Activated CD8-positive, alpha-beta T cell treated with anti-CD3 and anti-CD28 coated beads for 36 hours (primary cell): ENCODE measurements at regions of chrX and their contacts with region 1.

Region 1: DNA sequence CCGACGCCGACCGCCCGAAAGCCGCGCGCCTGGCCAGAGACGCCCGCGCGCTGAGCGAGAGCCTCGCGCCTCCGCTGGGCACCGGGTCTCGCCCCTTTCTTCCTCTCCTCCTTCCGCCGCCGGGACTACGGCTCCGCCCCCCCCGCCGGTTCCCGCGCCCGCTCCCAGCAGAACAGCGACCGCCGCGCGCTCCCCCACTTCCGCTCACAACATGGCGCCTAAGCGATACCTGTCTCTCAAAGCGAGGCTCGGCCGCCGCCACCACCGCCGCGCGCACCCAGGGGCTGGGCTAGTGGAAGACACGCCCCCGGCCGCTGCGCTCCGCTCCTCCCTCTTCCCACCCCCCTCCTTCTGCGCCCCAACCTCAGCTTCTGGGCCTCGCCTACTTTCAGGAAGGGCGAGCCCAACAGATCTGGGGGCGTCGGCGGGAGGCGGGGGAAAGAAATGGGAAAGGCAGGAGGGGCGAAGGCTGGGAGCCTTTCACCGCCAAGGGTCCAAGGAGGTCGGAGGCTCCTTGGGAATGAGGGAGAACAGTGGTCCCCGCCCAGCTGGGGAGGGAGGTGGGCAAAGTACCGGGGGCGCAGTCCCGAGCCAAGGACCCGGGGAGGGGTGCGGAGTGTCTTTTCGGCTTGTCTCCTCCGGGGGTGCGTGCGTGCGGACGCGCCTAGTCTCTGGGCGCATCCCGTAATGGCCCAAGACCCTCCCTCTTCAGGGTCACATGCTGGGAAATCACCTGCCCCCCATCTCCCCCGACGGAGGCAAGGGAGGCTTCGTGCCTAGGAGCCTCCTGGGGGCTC is at the start of gene RPS6KA3:
- DNase-seq: peak; percentile 92
- ATAC-seq: peak; percentile 84
- H3K4me3 Mint-ChIP-seq: peak within 1 kb of the TSS; percentile 86
- H3K27ac Mint-ChIP-seq: peak within 1 kb of the TSS; percentile 98
- H3K4me1 Mint-ChIP-seq: peaks cover 9% of the 10 kb centered on the region
- H3K27me3 Mint-ChIP-seq: no peaks in the 10 kb centered on the region
- CTCF ChIP-seq: no peak
- total RNA-seq, gene RPS6KA3: 52.6 to 56.9 TPM

Region 2: GRCh38 chrX:20091499-20091898 is 175.5 kb before region 1 on chrX:
- CTCF ChIA-PET with region 1: no interaction called
- POLR2A ChIA-PET with region 1: no interaction called
- intact Hi-C with region 1: no loop called
- DNase-seq: no peak
- ATAC-seq: no peak
- H3K4me3 Mint-ChIP-seq: no peak overlapping the region
- H3K27ac Mint-ChIP-seq: no peak overlapping the region
- H3K4me1 Mint-ChIP-seq: no peaks in the 10 kb centered on the region
- H3K27me3 Mint-ChIP-seq: peaks cover 3% of the 10 kb centered on the region
- CTCF ChIP-seq: no peak

Region 3: DNA sequence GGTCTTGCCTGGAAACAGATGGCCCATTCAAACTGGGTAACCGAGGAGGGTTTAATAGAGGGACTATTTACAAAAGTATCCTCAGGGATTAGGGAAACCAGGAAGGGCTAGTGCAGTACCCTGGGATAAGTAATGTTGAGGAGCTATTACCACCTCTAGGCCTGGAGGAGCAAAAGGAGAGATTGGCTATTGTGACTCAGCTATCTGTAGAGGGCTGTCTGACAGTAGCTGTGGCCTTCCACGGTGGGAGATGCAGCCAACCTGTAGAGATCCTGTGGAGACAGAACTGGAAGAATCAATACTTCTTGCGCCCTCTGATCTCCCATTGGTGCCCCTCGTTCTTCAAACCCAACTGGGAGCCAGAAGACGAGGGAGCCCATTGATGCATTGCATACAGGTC is 33.8 kb after region 1 on chrX:
- CTCF ChIA-PET with region 1: no interaction called
- POLR2A ChIA-PET with region 1: no interaction called
- intact Hi-C with region 1: no loop called
- DNase-seq: peak; percentile 13
- ATAC-seq: peak; percentile 45
- H3K4me3 Mint-ChIP-seq: no peak overlapping the region
- H3K27ac Mint-ChIP-seq: no peak overlapping the region
- H3K4me1 Mint-ChIP-seq: no peaks in the 10 kb centered on the region
- H3K27me3 Mint-ChIP-seq: peaks cover 3% of the 10 kb centered on the region
- CTCF ChIP-seq: no peak

Region 4: DNA sequence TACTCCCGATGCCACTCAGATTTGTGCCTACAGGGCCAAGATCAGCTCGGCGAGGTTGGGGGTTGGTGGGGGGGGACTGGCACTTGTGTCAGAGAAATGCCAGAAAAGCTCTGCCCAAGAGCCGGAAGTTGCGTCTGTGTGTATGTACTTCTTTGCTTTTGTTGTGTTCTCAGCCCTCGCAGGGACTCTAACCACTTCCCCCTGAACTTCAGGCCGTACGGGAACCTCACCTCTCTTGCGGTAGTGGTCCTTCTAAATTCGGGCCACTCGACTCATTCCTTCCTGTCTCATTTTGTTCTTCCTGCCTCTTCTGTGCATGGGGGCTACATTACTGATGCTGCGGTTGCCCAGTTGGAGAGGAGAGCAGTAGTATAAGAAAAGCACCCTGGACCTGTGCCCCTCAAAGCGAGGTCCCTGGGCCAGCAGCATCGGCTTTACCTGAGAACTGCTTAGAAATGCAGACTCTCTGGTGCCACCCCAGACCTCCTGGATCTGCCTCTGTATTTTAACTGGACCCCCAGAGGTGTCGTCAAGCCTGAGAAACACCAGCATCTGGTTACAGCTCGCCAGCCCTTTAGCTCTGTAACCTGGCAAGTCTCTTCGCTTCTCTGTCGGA is 146.0 kb after region 1 on chrX:
- CTCF ChIA-PET with region 1: no interaction called
- POLR2A ChIA-PET with region 1: interaction called, 4 read pairs
- intact Hi-C with region 1: loop called (anchors 10 kb)
- DNase-seq: peak; percentile 72
- ATAC-seq: peak; percentile 74
- H3K4me3 Mint-ChIP-seq: peak overlapping the region; percentile 55
- H3K27ac Mint-ChIP-seq: peak overlapping the region; percentile 85
- H3K4me1 Mint-ChIP-seq: peaks cover 30% of the 10 kb centered on the region
- H3K27me3 Mint-ChIP-seq: no peaks in the 10 kb centered on the region
- CTCF ChIP-seq: no peak